ENCODE measurements at regions of chr9 and their contacts with region 1.

Region 1: DNA sequence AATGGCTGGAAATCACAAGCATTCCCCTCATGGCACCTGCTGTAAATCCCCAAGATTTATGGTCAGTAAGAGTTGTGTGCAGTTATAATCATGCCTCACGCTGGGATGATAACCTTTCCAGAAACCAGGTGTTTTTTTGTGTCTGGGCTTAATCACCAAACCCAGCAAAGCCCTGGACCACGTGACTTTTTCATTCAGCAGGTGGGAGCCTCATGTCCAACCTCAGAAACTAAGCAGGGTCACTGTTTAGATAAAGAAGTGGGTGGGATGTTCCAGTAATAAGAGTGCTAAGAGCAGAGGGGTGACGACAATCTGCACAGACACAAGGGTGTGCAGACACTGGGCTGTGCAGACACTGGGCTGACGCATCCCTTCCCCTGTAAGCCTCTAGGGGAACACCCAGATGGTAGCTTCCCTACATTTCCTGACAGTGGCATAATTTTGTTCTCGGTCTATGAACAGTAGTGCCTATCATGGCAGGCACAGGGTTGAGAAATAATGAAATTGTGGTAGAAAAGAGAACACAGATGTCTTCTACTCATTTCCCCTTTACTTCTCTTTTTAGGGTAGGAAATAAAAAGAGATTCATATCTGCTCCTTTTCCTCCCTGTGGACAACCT is 85.1 kb downstream of the SAXO1 start:
- DNase-seq: no peak
- H3K4me3 ChIP-seq: no peak overlapping the region
- H3K27ac ChIP-seq: no peak overlapping the region
- H3K4me1 ChIP-seq: no peaks in the 10 kb centered on the region
- H3K27me3 ChIP-seq: no peaks in the 10 kb centered on the region
- CTCF ChIP-seq: no peak

Region 2: DNA sequence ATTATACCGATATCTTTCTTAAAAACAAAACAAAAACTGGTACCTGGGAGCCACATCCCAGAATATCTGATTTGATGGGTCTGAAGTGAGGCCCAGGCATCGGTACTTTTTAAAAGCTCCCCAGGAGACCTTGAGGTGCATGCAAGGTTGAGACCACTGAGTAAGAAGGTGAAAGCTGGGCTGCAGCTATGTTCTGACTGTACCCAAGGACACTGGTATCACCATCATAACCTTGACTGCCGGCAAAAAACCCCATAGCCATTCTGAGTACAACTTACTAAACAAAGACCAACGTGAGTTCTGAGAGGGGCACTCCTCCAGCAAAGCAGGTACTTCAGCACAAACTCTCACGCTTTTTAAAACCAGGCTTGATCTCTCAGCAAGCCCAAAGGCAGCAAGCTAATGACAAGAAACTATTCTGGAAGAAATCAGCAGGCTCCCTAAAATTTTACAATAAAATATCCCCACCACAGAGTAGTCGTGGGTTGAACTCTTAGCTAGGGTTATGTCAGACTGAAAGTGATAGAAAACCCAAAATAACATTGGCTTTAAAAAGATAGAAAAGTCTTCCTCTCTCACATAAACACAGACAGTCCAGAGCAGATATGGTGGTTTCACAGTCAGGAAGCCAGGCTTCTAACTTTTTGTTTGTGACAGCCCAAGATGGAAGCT is 178.8 kb before region 1 on chr9:
- intact Hi-C with region 1: loop called (anchors 10 kb)
- DNase-seq: no peak
- H3K4me3 ChIP-seq: no peak overlapping the region
- H3K27ac ChIP-seq: no peak overlapping the region
- H3K4me1 ChIP-seq: no peaks in the 10 kb centered on the region
- H3K27me3 ChIP-seq: no peaks in the 10 kb centered on the region
- CTCF ChIP-seq: no peak

Region 3: DNA sequence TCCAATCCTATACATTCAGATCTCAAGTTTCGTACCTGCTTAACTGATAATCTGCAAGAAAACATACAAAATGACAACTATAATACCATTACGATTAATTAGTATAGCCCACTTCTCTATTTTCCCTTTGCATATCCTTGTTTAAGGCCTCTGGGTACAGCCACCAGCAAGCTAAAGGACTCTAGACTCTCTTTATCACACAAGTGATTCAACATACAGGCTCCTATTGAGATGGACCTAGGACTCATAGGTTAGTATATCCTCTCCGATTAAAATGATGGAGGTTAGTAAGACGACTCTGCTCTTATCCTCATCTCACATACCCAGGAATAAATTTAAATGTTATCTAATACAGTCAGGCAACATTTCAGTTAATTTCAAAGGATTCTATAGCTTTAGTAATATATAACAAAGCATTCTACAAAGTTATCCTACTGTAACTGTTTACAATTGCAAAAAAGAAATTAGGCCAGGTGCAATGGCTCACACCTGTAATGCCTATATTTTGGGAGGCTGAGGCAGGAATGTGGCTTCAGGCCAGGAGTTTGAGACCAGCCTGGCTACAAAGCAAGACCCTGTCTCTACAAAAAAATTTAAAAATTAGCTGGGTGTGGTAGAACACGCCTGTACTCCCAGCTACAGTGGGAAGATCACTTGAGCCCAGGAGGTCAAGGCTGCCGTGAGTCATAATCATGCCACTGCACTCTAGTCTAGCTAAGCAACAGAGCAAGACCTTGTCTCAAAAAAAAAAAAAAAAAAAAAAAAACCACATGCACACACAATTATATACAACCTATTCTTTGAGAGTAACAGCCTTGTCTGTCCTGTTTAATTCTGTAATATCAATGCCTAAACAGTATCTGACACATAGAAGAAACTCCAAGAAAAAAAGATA is 139.5 kb after region 1 on chr9:
- intact Hi-C with region 1: no loop called
- DNase-seq: no peak
- H3K4me3 ChIP-seq: no peak overlapping the region
- H3K27ac ChIP-seq: no peak overlapping the region
- H3K4me1 ChIP-seq: no peaks in the 10 kb centered on the region
- H3K27me3 ChIP-seq: no peaks in the 10 kb centered on the region
- CTCF ChIP-seq: no peak

Measured in ascending aorta (tissue), 2 donors.